ENCODE measurements at regions of chr15 and their contacts with region 1.

Region 1: GRCh38 chr15:71448688-71449114 is 333.4 kb downstream of the THSD4 start:
- DNase-seq: peak; percentile 43
- H3K4me3 ChIP-seq: no peak overlapping the region
- H3K27ac ChIP-seq: no peak overlapping the region
- H3K4me1 ChIP-seq: no peaks in the 10 kb centered on the region
- CTCF ChIP-seq: peak; percentile 88

Region 2: DNA sequence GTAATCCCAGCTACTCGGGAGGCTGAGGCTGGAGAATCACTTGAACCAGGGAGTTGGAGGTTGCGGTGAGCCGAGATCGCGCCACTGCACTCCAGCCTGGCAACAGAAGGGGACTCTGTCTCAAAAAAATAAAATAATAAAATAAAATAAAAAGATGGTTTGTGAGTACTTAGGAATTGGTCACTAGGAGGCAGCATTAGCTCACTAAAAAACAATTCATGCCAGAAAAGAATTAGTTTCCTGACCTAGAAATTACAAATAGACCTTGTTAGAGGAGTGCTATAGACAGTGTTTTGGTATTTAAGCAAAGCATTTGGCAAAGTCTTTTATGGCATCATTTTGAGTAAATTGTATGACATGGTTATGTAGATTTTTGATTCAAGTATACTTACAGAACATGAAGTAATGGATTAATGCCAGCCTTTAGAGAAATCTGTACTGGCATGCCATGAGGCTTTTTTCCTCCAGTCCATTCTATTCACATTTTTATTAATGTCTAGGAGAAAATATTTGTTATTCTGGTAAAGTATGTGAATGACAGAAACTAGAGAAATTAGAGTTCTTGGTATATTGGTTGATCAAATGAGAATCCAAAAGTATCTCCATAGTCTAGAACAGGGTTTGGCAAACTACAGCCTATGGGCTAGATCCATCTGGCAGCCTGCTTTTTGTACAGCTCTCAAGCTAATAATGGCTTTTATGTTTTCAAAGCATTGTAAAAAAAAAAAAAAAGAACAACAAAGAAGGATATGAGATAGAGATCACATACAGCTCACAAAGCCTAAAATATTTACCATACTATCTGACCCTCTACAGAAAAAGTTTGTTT is 474.5 kb before region 1 on chr15:
- CTCF ChIA-PET with region 1: no interaction called
- POLR2A ChIA-PET with region 1: no interaction called
- intact Hi-C with region 1: loop called (anchors 10 kb)
- DNase-seq: peak; percentile 7
- H3K4me3 ChIP-seq: no peak overlapping the region
- H3K27ac ChIP-seq: no peak overlapping the region
- H3K4me1 ChIP-seq: no peaks in the 10 kb centered on the region
- CTCF ChIP-seq: peak; percentile 57

Region 3: DNA sequence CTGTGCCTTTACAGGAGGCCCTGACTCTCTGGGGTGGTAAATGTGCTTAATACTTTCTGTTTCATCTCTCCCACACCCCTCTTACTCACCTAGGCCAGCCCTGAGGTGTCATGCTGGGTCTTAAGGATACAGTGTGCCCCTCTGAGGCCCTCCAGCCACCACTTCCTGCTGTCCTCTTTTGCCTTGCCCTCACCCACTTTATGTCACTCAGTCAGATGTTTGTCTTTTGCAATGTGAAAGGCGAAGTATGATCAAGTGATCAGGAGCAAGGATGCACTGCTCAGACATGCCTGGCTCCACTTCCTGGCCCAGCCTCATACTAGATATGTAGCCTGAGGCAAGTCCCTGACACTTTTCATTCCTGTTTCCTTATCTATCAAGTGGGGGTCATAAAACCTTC is 22.6 kb after region 1 on chr15:
- CTCF ChIA-PET with region 1: no interaction called
- POLR2A ChIA-PET with region 1: no interaction called
- intact Hi-C with region 1: no loop called
- DNase-seq: no peak
- H3K4me3 ChIP-seq: no peak overlapping the region
- H3K27ac ChIP-seq: no peak overlapping the region
- H3K4me1 ChIP-seq: peaks cover 14% of the 10 kb centered on the region
- CTCF ChIP-seq: no peak

Region 4: GRCh38 chr15:71651750-71652186 is 203.1 kb after region 1 on chr15:
- CTCF ChIA-PET with region 1: no interaction called
- POLR2A ChIA-PET with region 1: no interaction called
- intact Hi-C with region 1: loop called (anchors 10 kb)
- DNase-seq: peak; percentile 45
- H3K4me3 ChIP-seq: no peak overlapping the region
- H3K27ac ChIP-seq: no peak overlapping the region
- H3K4me1 ChIP-seq: no peaks in the 10 kb centered on the region
- CTCF ChIP-seq: peak; percentile 78

Region 5: GRCh38 chr15:71730277-71731144 is 281.8 kb after region 1 on chr15:
- CTCF ChIA-PET with region 1: no interaction called
- POLR2A ChIA-PET with region 1: no interaction called
- intact Hi-C with region 1: loop called (anchors 1 kb)
- DNase-seq: peak; percentile 61
- H3K4me3 ChIP-seq: no peak overlapping the region
- H3K27ac ChIP-seq: no peak overlapping the region
- H3K4me1 ChIP-seq: no peaks in the 10 kb centered on the region
- CTCF ChIP-seq: peak; percentile 87

Region 6: DNA sequence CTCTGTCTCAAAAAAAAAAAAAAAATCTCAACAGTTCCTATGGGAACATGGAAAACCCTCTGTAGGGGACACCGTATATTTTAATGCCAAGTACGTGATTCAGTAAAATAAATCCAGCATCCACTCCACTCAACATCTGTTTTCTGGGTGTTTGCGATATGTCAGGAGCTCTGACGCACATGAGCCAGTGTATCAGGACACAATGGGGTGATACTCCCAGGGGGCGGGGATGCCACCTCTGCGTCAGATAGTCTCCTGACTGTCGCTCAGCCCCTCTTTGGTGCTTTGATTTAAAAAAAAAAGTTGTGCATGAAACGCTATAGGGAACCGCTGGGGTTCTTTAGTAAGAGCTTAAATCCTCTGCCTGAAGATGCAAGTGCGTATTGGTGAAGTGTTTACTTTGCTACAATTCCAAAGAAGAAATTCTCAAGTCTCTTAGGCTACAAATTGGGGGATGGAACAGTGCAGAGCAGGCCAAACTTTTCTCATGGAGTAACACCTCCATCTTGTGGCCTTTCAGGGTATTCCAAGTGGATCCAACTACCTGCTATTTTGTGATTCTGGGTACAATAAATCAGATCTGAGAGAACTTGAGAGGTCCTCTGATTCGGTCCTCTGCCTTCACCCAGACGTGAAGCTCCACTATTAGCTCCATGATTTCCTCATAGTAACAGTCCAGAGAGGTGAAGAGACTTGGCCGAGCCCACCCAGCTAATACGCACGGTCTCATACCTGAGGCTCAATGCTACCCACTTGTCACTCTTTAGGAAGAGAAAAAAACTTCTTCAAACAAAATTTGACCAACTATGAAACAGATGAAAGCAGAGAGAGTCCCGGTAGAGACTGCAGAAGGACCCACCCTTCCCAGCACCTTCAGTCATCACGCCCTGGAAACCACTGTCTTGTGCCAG is 352.4 kb after region 1 on chr15:
- CTCF ChIA-PET with region 1: no interaction called
- POLR2A ChIA-PET with region 1: no interaction called
- intact Hi-C with region 1: loop called (anchors 5 kb)
- DNase-seq: peak; percentile 49
- H3K4me3 ChIP-seq: no peak overlapping the region
- H3K27ac ChIP-seq: no peak overlapping the region
- H3K4me1 ChIP-seq: peaks cover 7% of the 10 kb centered on the region
- CTCF ChIP-seq: peak; percentile 85